ENCODE measurements at regions of chr11 and their contacts with region 1.

Region 1: DNA sequence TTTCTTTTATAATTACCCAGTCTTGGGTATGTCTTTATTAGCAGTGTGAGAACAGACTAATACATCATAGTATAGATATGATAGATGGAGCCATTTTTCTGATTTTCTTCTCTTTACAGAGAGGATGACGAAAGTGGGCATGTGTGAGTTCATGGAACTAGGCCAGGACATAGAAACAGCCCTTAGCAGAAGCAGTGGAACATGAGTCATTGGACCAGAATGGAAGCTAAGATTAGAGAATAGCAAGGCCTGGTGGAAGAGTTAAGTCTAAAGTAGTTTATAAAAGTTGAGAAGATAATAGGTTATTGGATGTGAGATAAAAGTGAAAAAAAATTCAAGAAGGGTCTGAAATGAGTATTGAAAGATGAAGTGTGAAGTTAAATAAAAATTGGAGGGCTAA is 97.0 kb upstream of the MPPED2 start:
- DNase-seq: no peak
- H3K4me3 ChIP-seq: no peak overlapping the region
- H3K27ac ChIP-seq: no peak overlapping the region
- H3K4me1 ChIP-seq: no peaks in the 10 kb centered on the region
- H3K27me3 ChIP-seq: no peaks in the 10 kb centered on the region
- CTCF ChIP-seq: no peak
- POLR2A ChIP-seq: no peak

Region 2: DNA sequence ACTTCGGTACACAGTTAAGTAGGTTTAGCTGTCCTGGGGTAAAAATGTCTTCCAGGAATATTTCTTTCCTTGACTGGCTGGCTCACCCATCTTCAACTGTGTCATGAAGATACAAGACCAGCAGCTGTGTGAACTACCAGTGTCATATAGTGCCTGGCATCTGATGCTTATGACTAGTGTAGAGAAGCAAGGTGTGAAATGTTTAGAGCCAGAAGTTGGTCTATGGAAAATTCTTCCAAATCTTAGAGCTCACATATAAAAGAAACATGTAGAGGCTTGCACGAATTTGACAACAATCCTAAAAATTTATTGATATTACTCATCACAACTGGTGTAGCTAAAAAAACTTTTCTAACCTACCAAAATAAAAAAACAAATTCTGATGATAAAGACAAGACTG is 305.8 kb before region 1 on chr11:
- intact Hi-C with region 1: loop called in 1 of 2 experiments (anchors 10 kb)
- DNase-seq: no peak
- H3K4me3 ChIP-seq: no peak overlapping the region
- H3K27ac ChIP-seq: no peak overlapping the region
- H3K4me1 ChIP-seq: no peaks in the 10 kb centered on the region
- H3K27me3 ChIP-seq: no peaks in the 10 kb centered on the region
- CTCF ChIP-seq: no peak
- POLR2A ChIP-seq: no peak

Region 3: GRCh38 chr11:30457087-30457486 is 226.1 kb before region 1 on chr11:
- intact Hi-C with region 1: no loop called
- DNase-seq: peak in 2 of 7 donors; percentile 5 to 17
- H3K4me3 ChIP-seq: no peak overlapping the region
- H3K27ac ChIP-seq: peak overlapping the region in 1 of 5 donors; percentile 21
- H3K4me1 ChIP-seq: peaks cover 0 to 4% of the 10 kb centered on the region in 2 donors
- H3K27me3 ChIP-seq: no peaks in the 10 kb centered on the region
- CTCF ChIP-seq: no peak
- POLR2A ChIP-seq: no peak